Naive thymus-derived CD4-positive, alpha-beta T cell (primary cell): ENCODE measurements at regions of chr11 and their contacts with region 1.

Region 1: GRCh38 chr11:73972620-73973449 is 9.8 kb downstream of the UCP2 start:
- DNase-seq: no peak
- ATAC-seq: no peak
- H3K4me3 ChIP-seq: no peak overlapping the region
- H3K4me3 Mint-ChIP-seq: peak overlapping the region in 9 of 10 donors; percentile 0 to 96 (median 58)
- H3K27ac ChIP-seq: peak overlapping the region; percentile 59
- H3K27ac Mint-ChIP-seq: peak overlapping the region; percentile 79 to 100 (median 98)
- H3K4me1 ChIP-seq: peaks cover 86 to 93% of the 10 kb centered on the region in 2 donors
- H3K4me1 Mint-ChIP-seq: peaks cover 74 to 100% (median 89%) of the 10 kb centered on the region in 7 donors
- H3K27me3 ChIP-seq: no peaks in the 10 kb centered on the region
- H3K27me3 Mint-ChIP-seq: no peaks in the 10 kb centered on the region

Region 2: DNA sequence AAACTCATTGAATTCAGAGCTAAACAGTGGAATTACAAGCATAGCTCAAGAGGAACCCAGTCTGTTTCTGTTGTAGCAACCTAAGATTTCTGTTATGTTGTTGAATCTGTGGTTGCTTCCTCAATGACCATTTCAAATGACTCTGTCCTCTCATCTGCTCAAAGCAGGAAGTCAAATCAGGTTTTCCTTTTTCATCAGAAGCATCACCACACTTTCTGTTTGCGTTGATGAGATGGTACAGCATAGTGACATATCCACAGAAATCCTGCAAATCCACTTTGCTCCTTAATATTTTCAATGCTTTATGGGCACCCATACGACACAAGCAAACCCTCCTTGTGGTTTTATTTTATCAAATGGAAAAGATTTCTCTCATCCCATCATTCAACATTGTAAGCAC is 22.4 kb after region 1 on chr11:
- CTCF ChIA-PET with region 1: interaction called, 4 read pairs
- POLR2A ChIA-PET with region 1: interaction called, 1,403 read pairs
- intact Hi-C with region 1: loop called (anchors 1 kb)
- DNase-seq: peak in 8 of 9 donors; percentile 16 to 93 (median 90)
- ATAC-seq: peak; percentile 85
- H3K4me3 ChIP-seq: peak overlapping the region; percentile 4
- H3K4me3 Mint-ChIP-seq: peak overlapping the region; percentile 65 to 92 (median 80)
- H3K27ac ChIP-seq: peak overlapping the region; percentile 92
- H3K27ac Mint-ChIP-seq: peak overlapping the region; percentile 93 to 100 (median 97)
- H3K4me1 ChIP-seq: peaks cover 33 to 45% of the 10 kb centered on the region in 2 donors
- H3K4me1 Mint-ChIP-seq: peaks cover 26 to 81% (median 71%) of the 10 kb centered on the region in 7 donors
- H3K27me3 ChIP-seq: no peaks in the 10 kb centered on the region
- H3K27me3 Mint-ChIP-seq: no peaks in the 10 kb centered on the region

Region 3: DNA sequence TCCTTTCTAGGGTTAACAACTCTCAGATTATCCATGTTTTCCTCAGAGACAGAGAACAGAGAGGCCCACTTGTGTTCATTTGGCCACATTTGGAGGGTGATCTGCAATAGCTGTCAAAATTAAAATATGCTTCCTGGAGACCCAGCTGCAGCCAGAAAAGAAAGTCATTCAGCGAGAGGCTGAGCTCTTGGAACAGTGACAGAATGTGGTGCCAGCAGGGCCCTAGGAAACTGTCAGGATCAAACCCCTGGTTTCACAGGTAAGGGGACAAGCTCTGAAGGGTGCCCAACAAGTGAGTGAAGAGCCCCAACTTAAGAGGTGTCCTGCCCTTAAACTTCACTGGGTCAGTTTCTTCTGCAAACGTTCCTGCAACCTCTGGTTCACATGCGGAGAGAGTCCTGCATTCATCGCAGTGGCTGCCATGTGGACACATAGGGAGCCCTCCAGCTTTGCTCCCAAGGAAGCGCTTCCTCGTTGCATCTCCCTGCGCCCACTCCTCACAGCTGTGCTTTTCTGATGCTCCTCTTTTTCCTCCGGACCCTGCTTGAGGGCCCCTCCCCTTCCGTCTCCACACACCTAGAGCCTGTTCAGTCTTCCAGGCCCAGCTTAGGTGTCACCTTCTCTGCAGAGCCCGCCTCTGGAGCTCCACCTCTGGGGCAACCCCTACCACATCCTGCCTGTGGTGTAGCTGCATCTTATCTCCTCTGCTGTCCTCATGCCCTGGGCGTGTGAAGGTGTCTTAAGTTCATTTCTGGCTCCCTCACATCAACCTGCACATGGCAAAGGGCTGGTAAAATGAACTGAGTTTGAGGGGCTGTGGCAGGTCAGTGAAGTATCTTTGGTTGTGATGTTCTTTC is 32.2 kb after region 1 on chr11:
- CTCF ChIA-PET with region 1: interaction called, 11 read pairs
- POLR2A ChIA-PET with region 1: interaction called, 1,403 read pairs
- intact Hi-C with region 1: loop called (anchors 1 to 2 kb)
- DNase-seq: peak; percentile 55 to 94 (median 91)
- ATAC-seq: peak; percentile 100
- H3K4me3 ChIP-seq: peak overlapping the region; percentile 44
- H3K4me3 Mint-ChIP-seq: peak overlapping the region; percentile 74 to 91 (median 83)
- H3K27ac ChIP-seq: peak overlapping the region; percentile 75
- H3K27ac Mint-ChIP-seq: peak overlapping the region; percentile 92 to 99 (median 96)
- H3K4me1 ChIP-seq: peaks cover 60 to 62% of the 10 kb centered on the region in 2 donors
- H3K4me1 Mint-ChIP-seq: peaks cover 48 to 85% (median 78%) of the 10 kb centered on the region in 7 donors
- H3K27me3 ChIP-seq: no peaks in the 10 kb centered on the region
- H3K27me3 Mint-ChIP-seq: no peaks in the 10 kb centered on the region